ENCODE measurements at regions of chr12 and their contacts with region 1.

Region 1: GRCh38 chr12:111298582-111299436 is 70.1 kb downstream of the PHETA1 start:
- DNase-seq: peak in 9 of 10 donors; percentile 37 to 71 (median 48)
- H3K4me3 ChIP-seq: no peak overlapping the region
- H3K27ac ChIP-seq: no peak overlapping the region
- H3K27me3 ChIP-seq: peaks cover 0 to 5% (median 0%) of the 10 kb centered on the region in 45 donors
- CTCF ChIP-seq: peak; percentile 65 to 94 (median 85)

Region 2: GRCh38 chr12:110937104-110937641 is 361.6 kb before region 1 on chr12:
- intact Hi-C with region 1: loop called (anchors 2 to 5 kb)
- DNase-seq: peak in 8 of 10 donors; percentile 37 to 80 (median 55)
- H3K4me3 ChIP-seq: peak overlapping the region in 2 of 59 donors; percentile 7 to 23
- H3K27ac ChIP-seq: no peak overlapping the region
- H3K27me3 ChIP-seq: peaks cover 0 to 63% (median 6%) of the 10 kb centered on the region in 45 donors
- CTCF ChIP-seq: peak; percentile 71 to 97 (median 92)

Region 3: GRCh38 chr12:111024205-111024801 is 274.5 kb before region 1 on chr12:
- intact Hi-C with region 1: no loop called
- DNase-seq: peak in 7 of 10 donors; percentile 30 to 56 (median 38)
- H3K4me3 ChIP-seq: no peak overlapping the region
- H3K27ac ChIP-seq: no peak overlapping the region
- H3K27me3 ChIP-seq: peaks cover 0 to 80% (median 26%) of the 10 kb centered on the region in 45 donors
- CTCF ChIP-seq: peak; percentile 23 to 78 (median 66)

Region 4: DNA sequence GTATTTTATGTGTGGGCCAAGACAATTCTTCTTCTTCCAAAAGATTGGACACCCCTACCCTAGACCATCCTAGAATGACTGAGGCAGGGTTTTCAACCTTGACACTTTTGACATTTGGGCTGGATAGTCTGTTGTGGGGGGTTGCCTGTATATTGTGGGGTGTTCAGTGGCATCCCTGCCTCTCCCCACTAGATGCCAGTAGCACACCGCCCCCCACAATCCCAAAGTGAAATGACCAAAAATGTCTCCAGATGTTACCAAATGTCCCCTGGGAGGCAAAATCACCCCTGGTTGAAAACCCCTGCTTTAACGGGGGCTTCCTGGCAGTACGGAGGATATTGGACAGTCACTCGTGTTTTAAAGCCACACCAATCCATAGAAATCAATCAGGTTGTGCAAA is 149.5 kb before region 1 on chr12:
- intact Hi-C with region 1: loop called in 1 of 2 experiments (anchors 10 kb)
- DNase-seq: no peak
- H3K4me3 ChIP-seq: no peak overlapping the region
- H3K27ac ChIP-seq: peak overlapping the region in 1 of 59 donors; percentile 0
- H3K27me3 ChIP-seq: peaks cover 0 to 6% (median 0%) of the 10 kb centered on the region in 45 donors
- CTCF ChIP-seq: peak in 40 of 56 donors; percentile 9 to 50 (median 30)

Region 5: DNA sequence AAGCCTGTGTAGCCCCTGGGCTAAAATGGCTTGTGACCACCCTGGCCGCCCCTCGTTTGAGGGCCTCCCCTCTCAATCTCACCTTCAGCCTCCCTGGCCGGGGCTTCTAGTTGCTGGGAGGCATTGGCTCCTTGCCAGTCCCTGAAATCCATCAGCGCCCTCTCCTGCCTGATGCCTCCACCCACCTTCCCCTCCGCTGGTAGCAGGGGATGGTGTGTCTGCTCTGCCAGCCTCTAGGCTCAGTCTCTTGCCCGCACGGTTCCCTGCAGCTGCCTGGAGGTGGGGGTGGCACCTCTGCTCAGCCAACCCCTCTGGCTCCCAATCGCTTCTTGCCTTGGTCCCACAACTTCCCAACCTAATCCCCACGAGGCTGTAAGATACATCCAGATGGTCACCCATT is 97.8 kb before region 1 on chr12:
- intact Hi-C with region 1: no loop called
- DNase-seq: no peak
- H3K4me3 ChIP-seq: no peak overlapping the region
- H3K27ac ChIP-seq: peak overlapping the region in 4 of 59 donors; percentile 5 to 36 (median 18)
- H3K27me3 ChIP-seq: peaks cover 0 to 19% (median 0%) of the 10 kb centered on the region in 45 donors
- CTCF ChIP-seq: no peak